Activated CD8-positive, alpha-beta T cell treated with anti-CD3 and anti-CD28 coated beads for 36 hours (primary cell): ENCODE measurements at regions of chr16 and their contacts with region 1.

Region 1: DNA sequence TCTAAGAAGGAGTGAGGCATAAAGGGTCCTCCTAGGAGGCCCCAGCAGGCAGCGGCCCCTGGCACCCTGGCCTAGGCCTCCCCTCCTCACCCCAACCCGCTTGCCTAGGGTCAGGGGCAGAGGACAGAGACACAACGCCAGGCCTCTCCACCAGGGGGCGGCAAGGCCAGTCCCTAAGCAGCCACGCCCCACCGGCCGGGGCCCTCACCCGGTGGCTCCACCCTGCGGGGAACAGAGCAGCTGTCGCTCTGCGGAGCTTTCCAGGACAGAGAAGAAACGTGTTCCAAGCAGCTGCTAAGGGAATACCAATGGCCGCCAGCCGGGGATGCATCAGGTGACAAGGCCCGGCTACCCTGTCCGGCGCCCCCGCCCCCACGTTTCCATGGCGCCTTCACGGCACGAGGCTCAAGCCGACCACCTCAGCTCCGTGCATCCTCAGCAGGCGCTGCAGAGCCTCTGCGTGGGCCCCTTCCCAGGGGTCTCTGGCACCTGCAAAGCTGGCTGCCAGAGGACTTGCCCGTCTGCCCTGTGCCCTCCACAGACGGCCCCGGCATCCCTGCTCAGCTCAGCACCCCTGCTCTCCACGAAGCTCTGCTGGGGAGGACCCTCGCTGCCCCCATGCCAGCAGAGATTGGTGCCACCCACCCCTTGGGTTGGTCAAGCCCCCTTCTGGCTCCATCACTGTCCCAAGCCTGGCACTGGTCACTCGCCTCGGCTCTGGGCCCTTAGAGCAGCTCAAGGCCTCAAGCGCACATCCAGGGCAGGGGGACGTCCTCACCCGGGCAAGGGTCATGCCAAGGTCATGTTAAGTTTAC is 5.6 kb downstream of the ZNF598 start:
- DNase-seq: peak; percentile 94
- ATAC-seq: peak; percentile 96
- H3K4me3 Mint-ChIP-seq: no peak overlapping the region
- H3K27ac Mint-ChIP-seq: no peak overlapping the region
- H3K4me1 Mint-ChIP-seq: peaks cover 37% of the 10 kb centered on the region
- H3K27me3 Mint-ChIP-seq: no peaks in the 10 kb centered on the region
- CTCF ChIP-seq: peak; percentile 95

Region 2: GRCh38 chr16:1991948-1992703 is 11.9 kb before region 1 on chr16:
- CTCF ChIA-PET with region 1: interaction called, 34 read pairs
- POLR2A ChIA-PET with region 1: interaction called, 7 read pairs
- intact Hi-C with region 1: no loop called
- DNase-seq: peak; percentile 98
- ATAC-seq: peak; percentile 82
- H3K4me3 Mint-ChIP-seq: peak overlapping the region; percentile 71
- H3K27ac Mint-ChIP-seq: peak overlapping the region; percentile 34
- H3K4me1 Mint-ChIP-seq: peaks cover 20% of the 10 kb centered on the region
- H3K27me3 Mint-ChIP-seq: peaks cover 18% of the 10 kb centered on the region
- CTCF ChIP-seq: no peak

Region 3: DNA sequence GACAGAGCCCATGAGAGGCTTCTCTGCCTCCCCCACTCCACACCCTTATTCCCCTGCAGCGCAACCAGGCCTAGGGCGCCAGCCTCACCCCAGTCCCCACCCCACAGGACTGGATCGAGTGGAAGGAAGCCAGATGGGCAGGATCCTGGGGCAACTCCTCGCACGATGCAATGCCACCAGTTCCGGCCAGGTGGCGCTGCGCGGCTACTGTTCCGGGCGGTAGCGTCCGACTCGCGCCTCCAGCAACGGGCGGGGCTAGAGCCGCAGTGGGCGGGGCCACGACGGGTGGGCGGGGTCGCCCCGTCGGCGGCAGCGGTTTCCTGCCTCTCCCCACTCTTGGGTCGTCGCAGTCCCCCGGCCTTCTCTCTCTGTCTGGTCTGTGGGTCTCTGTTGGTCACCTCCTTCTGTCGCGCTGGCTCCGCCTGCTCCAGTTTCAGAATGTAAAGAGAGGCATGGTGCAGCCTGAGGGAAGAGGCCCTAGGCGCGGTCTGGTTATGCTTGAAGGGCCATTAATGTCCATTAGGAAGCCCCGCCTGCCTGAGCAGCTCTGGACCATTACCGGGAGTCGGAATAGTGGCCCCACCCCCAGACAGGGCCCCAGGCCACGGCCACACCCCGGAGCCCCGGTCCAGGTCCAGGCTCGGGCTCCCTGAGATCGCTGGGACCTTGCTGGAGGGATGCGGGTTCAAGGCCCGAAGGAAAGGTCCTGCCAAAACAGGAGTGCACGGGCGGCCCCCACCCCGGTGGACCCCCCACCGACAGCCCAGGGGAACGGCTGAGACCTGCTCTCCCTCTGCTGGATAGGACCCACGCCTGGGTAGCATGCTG is 19.3 kb after region 1 on chr16:
- CTCF ChIA-PET with region 1: interaction called, 13 read pairs
- POLR2A ChIA-PET with region 1: interaction called, 6 read pairs
- intact Hi-C with region 1: no loop called
- DNase-seq: peak; percentile 95
- ATAC-seq: peak; percentile 89
- H3K4me3 Mint-ChIP-seq: peak overlapping the region; percentile 49
- H3K27ac Mint-ChIP-seq: no peak overlapping the region
- H3K4me1 Mint-ChIP-seq: peaks cover 24% of the 10 kb centered on the region
- H3K27me3 Mint-ChIP-seq: peaks cover 29% of the 10 kb centered on the region
- CTCF ChIP-seq: peak; percentile 97

Region 4: GRCh38 chr16:2047330-2048115 is 43.5 kb after region 1 on chr16 and contains the starts of genes NTHL1 and TSC2:
- CTCF ChIA-PET with region 1: interaction called, 10 read pairs
- POLR2A ChIA-PET with region 1: interaction called, 4 read pairs
- intact Hi-C with region 1: no loop called
- DNase-seq: peak; percentile 97
- ATAC-seq: peak; percentile 97
- H3K4me3 Mint-ChIP-seq: peak within 1 kb of the TSS; percentile 93
- H3K27ac Mint-ChIP-seq: peak within 1 kb of the TSS; percentile 70
- H3K4me1 Mint-ChIP-seq: peaks cover 22% of the 10 kb centered on the region
- H3K27me3 Mint-ChIP-seq: no peaks in the 10 kb centered on the region
- CTCF ChIP-seq: peak; percentile 33
- total RNA-seq, gene NTHL1: 28.2 to 29.8 TPM
- total RNA-seq, gene TSC2: 54.4 to 57.3 TPM

Region 5: DNA sequence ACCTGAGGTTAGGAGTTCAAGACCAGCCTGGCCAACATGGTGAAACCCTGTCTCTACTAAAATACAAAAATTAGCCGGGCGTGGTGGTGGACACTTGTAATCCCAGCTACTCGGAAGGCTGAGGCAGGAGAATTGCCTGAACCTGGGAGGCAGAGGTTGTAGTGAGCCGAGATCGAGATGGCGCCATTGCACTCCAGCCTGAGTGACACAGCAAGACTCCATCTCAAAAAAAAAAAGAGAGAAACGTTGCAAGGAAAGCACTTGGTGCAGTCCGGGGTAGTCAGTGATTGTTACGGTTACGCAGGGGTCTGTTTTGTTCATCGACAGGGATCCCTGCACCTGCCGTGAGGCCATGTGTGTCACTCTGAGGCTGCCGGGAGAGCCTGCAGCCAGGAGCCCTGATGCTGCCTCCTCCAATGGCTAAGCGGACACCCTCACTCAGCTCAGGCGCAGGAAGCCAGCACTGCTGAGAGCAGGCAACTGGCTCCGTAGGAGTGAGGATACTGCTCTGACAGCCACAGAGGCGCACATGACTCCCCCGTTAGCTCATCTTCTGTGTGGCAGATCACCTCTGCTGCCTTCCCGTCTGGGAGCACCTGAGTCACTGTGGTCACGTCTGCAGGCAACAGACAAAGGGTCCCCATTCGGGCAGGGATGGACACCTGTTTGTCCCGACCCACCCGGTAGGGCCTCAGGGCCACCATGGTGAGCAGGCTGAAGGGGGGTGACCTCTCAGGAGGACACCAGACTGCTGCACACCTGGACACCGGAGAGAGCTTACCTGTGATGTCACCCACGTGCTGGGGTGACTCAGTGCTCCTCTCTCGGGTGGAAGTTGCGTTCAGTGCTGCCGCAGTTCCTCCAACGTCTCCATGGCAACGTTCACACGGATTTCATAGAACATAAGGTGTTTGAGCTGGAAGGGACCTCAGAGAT is 139.2 kb after region 1 on chr16:
- CTCF ChIA-PET with region 1: interaction called, 27 read pairs
- POLR2A ChIA-PET with region 1: interaction called, 3 read pairs
- intact Hi-C with region 1: no loop called
- DNase-seq: peak; percentile 36
- ATAC-seq: peak; percentile 36
- H3K4me3 Mint-ChIP-seq: no peak overlapping the region
- H3K27ac Mint-ChIP-seq: no peak overlapping the region
- H3K4me1 Mint-ChIP-seq: peaks cover 2% of the 10 kb centered on the region
- H3K27me3 Mint-ChIP-seq: no peaks in the 10 kb centered on the region
- CTCF ChIP-seq: no peak